GM13977 (cell line): ENCODE measurements at regions of chr12 and their contacts with region 1.

Region 1: DNA sequence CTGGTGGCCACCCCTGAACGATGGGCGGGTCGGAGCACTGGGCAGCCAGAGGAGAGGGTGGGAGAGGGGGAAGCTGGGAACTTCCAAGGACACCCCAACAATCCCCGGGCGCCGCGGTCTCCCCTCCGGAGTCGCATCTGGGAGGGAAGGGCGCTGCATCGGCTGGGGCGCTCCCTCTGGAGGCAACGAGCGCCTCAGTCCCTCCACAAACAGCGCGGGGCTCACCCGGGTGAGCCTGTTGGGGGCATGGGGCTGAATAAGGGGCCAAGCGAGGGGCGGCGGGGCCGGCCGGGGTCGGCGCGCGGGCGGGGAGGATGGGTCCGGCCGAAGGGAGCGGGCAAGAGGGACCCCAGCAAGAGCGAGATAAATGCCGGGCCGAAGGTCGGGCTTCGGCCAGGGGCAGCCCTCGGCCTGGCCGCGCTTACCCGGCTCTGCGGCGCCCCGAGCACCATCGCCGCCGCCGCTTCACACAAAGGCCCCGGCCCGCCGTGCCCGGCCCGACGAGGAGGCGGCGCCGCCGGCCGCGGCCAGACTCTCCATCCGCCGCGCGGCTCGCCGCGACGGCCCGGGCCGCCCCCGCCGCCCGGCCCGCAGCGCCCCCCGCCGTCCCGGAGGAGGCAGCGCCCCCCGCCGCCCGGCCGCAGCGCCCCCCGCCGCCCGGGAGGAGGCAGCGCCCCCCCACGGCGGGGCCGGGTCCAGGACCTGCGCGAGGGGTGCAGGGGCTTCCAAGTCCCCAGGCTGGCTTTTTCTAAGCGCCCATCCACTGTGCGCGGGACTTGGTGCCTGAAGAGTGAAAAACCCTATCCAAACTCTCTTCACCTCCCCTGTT is at the start of gene ZBTB39:
- DNase-seq: peak; percentile 95
- CTCF ChIP-seq: peak; percentile 63

Region 2: DNA sequence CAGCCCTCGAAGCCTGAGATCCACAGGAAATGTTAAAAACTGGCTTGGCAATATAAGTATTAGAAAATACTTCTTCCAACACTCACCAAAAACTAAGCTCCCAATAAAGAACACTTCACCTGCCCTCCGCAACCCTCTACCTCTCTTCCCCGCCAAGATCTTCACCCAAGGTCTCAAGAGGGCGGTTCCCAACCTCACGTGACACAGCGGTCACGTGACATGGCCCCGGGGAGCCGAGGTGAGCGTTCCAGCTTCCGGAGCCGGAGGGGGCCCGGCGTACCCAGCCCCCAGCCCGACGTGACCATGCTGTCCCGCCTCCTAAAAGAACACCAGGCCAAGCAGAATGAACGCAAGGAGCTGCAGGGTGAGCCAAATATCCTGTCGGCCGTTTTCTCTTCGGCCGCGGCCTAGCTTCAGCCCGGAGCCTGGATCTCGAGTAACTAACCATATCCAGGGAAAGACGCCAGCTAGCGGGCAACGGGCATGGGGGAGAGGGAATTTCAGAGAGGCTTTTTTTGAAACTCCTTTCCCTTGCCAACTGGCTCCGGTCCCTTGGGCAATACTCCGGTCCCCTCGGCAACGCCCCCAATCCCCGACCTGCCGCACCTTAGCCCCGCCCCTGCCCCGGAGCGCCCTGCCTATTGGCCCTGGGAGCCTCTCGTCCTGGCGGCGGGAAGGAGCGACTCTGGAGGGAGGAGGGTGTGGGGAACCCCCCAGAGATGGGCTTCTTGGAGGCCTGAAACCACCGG is 1290.2 kb before region 1 on chr12 and contains the start of gene BLOC1S1:
- in situ Hi-C with region 1: no loop called
- DNase-seq: peak; percentile 94
- CTCF ChIP-seq: no peak

Region 3: GRCh38 chr12:56286044-56286830 is 720.0 kb before region 1 on chr12:
- in situ Hi-C with region 1: no loop called
- DNase-seq: no peak
- CTCF ChIP-seq: no peak

Region 4: GRCh38 chr12:56759263-56759908 is 246.8 kb before region 1 on chr12:
- in situ Hi-C with region 1: loop called (anchors 5 kb)
- DNase-seq: no peak
- CTCF ChIP-seq: no peak

Region 5: GRCh38 chr12:57175428-57176138 is 169.4 kb after region 1 on chr12:
- in situ Hi-C with region 1: loop called (anchors 10 kb)
- DNase-seq: no peak
- CTCF ChIP-seq: peak; percentile 64